CD8-positive, alpha-beta T cell (primary cell): ENCODE measurements at regions of chr5 and their contacts with region 1.

Region 1: DNA sequence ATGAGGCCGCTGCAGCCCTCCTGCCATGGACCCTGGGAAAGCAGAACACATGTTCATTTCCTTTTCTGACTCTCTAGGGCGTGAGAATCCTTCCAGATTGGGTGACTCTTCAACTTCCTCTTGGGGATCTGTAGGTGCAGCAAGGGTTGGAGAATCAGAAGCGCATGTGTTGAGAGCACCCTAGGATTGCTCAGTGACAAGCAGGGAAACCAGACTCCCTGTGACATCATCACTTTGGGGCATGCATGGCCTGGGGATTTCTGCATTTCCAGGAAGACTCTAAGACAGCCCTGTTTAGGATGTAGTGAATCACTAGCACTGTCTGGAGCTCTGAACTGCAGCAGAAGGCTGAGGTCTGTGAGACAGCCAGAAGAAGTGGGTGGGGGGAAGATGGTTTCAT is 15.1 kb upstream of the LCP2 start:
- DNase-seq: peak in 5 of 9 experiments; percentile 45 to 87 (median 75)
- ATAC-seq: peak; percentile 90
- H3K4me3 ChIP-seq: no peak overlapping the region
- H3K4me3 Mint-ChIP-seq: peak overlapping the region; percentile 59
- H3K27ac ChIP-seq: peak overlapping the region in 1 of 2 experiments; percentile 40
- H3K27ac Mint-ChIP-seq: peak overlapping the region; percentile 89
- H3K4me1 ChIP-seq: peaks cover 43% of the 10 kb centered on the region
- H3K4me1 Mint-ChIP-seq: peaks cover 73% of the 10 kb centered on the region
- H3K27me3 ChIP-seq: no peaks in the 10 kb centered on the region
- H3K27me3 Mint-ChIP-seq: no peaks in the 10 kb centered on the region
- CTCF ChIP-seq: no peak

Region 2: GRCh38 chr5:170200876-170201275 is 111.8 kb before region 1 on chr5:
- CTCF ChIA-PET with region 1: no interaction called
- POLR2A ChIA-PET with region 1: no interaction called
- intact Hi-C with region 1: no loop called
- DNase-seq: no peak
- ATAC-seq: no peak
- H3K4me3 ChIP-seq: no peak overlapping the region
- H3K4me3 Mint-ChIP-seq: no peak overlapping the region
- H3K27ac ChIP-seq: no peak overlapping the region
- H3K27ac Mint-ChIP-seq: no peak overlapping the region
- H3K4me1 ChIP-seq: no peaks in the 10 kb centered on the region
- H3K4me1 Mint-ChIP-seq: no peaks in the 10 kb centered on the region
- H3K27me3 ChIP-seq: no peaks in the 10 kb centered on the region
- H3K27me3 Mint-ChIP-seq: peaks cover 16% of the 10 kb centered on the region
- CTCF ChIP-seq: no peak

Region 3: GRCh38 chr5:170262061-170263045 is 50.3 kb before region 1 on chr5:
- CTCF ChIA-PET with region 1: no interaction called
- POLR2A ChIA-PET with region 1: no interaction called
- intact Hi-C with region 1: no loop called
- DNase-seq: peak in 6 of 9 experiments; percentile 43 to 87 (median 67)
- ATAC-seq: peak; percentile 77
- H3K4me3 ChIP-seq: peak overlapping the region in 1 of 2 experiments; percentile 11
- H3K4me3 Mint-ChIP-seq: peak overlapping the region; percentile 74
- H3K27ac ChIP-seq: peak overlapping the region; percentile 45 to 62
- H3K27ac Mint-ChIP-seq: peak overlapping the region; percentile 98
- H3K4me1 ChIP-seq: peaks cover 81% of the 10 kb centered on the region
- H3K4me1 Mint-ChIP-seq: peaks cover 96% of the 10 kb centered on the region
- H3K27me3 ChIP-seq: no peaks in the 10 kb centered on the region
- H3K27me3 Mint-ChIP-seq: no peaks in the 10 kb centered on the region
- CTCF ChIP-seq: no peak

Region 4: DNA sequence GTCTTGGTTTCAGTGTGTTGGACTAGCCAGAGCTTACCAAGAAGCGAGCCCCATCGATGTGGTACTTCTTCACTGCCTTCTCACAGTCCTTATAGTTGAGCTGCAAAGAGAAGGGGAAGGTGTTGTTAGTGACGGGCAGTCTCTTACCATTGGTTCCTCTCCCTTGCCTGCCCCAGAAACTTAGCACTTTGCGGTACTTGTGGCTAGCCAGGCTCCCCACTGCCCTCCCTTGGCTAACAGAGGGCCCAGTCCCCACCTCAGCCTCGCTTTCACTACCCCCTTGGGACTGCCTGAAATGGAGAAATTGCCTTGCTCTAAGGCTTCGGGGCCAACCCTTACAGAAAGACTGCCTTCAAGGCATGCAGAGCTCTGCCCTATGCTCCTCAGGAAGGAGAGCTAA is 19.4 kb before region 1 on chr5:
- CTCF ChIA-PET with region 1: interaction called, 4 read pairs
- POLR2A ChIA-PET with region 1: interaction called, 7 read pairs
- intact Hi-C with region 1: loop called in 1 of 2 experiments (anchors 2 kb)
- DNase-seq: peak in 6 of 9 experiments; percentile 53 to 86 (median 72)
- ATAC-seq: peak; percentile 29
- H3K4me3 ChIP-seq: peak overlapping the region; percentile 87 to 94
- H3K4me3 Mint-ChIP-seq: peak overlapping the region; percentile 99
- H3K27ac ChIP-seq: peak overlapping the region in 1 of 2 experiments; percentile 86
- H3K27ac Mint-ChIP-seq: peak overlapping the region; percentile 97
- H3K4me1 ChIP-seq: peaks cover 73% of the 10 kb centered on the region
- H3K4me1 Mint-ChIP-seq: peaks cover 82% of the 10 kb centered on the region
- H3K27me3 ChIP-seq: no peaks in the 10 kb centered on the region
- H3K27me3 Mint-ChIP-seq: no peaks in the 10 kb centered on the region
- CTCF ChIP-seq: no peak

Region 5: DNA sequence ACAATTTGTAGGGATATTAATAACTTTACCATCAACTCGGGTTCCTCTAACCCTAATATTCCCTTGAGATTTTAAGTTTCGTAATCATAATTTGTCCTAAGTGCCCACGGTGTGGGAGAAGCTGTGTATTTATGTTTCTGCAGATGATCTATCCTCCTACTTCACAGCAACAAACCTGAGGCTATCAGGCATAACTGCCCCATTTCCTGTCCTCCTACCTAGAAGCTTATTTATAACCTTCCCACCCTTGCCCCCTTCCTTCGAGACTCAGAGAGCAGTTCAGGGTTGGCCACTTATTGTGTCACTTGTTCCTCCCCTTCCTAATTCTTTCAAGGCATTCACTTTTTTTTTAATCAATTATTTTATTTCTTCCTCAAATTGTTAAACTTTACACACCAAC is 14.5 kb after region 1 on chr5:
- CTCF ChIA-PET with region 1: interaction called, 6 read pairs
- POLR2A ChIA-PET with region 1: interaction called, 24 read pairs
- intact Hi-C with region 1: loop called (anchors 1 to 2 kb)
- DNase-seq: peak in 1 of 9 experiments; percentile 35
- ATAC-seq: no peak
- H3K4me3 ChIP-seq: no peak overlapping the region
- H3K4me3 Mint-ChIP-seq: no peak overlapping the region
- H3K27ac ChIP-seq: peak overlapping the region in 1 of 2 experiments; percentile 36
- H3K27ac Mint-ChIP-seq: no peak overlapping the region
- H3K4me1 ChIP-seq: peaks cover 52% of the 10 kb centered on the region
- H3K4me1 Mint-ChIP-seq: peaks cover 12% of the 10 kb centered on the region
- H3K27me3 ChIP-seq: no peaks in the 10 kb centered on the region
- H3K27me3 Mint-ChIP-seq: no peaks in the 10 kb centered on the region
- CTCF ChIP-seq: no peak

Region 6: GRCh38 chr5:171122372-171122771 is 809.7 kb after region 1 on chr5:
- CTCF ChIA-PET with region 1: no interaction called
- POLR2A ChIA-PET with region 1: no interaction called
- intact Hi-C with region 1: no loop called
- DNase-seq: no peak
- ATAC-seq: no peak
- H3K4me3 ChIP-seq: no peak overlapping the region
- H3K4me3 Mint-ChIP-seq: no peak overlapping the region
- H3K27ac ChIP-seq: no peak overlapping the region
- H3K27ac Mint-ChIP-seq: no peak overlapping the region
- H3K4me1 ChIP-seq: no peaks in the 10 kb centered on the region
- H3K4me1 Mint-ChIP-seq: no peaks in the 10 kb centered on the region
- H3K27me3 ChIP-seq: no peaks in the 10 kb centered on the region
- H3K27me3 Mint-ChIP-seq: peaks cover 9% of the 10 kb centered on the region
- CTCF ChIP-seq: no peak